ENCODE measurements at regions of chr17 and their contacts with region 1.

Region 1: DNA sequence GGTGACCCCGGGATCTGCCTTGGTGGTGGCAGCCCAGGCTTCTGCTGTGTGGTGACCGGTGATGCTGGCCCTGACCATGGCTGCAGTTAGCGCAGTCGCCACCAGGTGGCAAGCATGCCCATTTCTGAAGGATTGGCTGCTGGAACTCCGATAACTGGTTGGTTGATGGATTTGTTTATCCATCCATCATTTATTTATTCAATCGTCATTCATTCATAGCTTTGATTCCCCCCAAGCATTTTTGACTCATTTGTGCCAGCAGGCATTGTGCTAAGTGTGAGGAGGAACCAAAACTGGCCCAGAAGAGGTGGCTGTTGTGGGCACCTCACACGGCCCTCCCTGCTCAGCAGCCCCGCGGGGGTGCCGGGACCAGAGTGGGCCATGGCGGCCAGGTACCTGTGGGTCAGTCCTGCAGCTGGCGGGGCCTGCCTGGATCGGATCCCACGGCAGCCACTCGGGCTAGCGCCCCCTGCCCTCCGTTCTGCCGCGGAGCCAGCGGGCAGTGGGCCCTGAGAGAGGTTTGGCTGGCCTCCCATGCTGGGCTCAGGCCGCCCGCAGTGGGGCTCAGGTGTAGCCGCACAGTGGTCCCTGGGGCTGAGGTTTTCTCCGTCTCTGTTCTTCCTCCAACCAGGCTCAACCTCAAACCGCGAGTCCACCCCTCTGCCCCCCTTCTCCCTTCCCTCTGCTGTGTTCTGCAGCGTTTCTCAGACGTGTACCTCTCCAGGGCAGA is 28.8 kb upstream of the ITGA3 start:
- DNase-seq: peak; percentile 64 to 89
- ATAC-seq: peak; percentile 92

Region 2: GRCh38 chr17:49910094-49910857 is 116.8 kb before region 1 on chr17:
- intact Hi-C with region 1: no loop called
- DNase-seq: no peak
- ATAC-seq: no peak

Region 3: DNA sequence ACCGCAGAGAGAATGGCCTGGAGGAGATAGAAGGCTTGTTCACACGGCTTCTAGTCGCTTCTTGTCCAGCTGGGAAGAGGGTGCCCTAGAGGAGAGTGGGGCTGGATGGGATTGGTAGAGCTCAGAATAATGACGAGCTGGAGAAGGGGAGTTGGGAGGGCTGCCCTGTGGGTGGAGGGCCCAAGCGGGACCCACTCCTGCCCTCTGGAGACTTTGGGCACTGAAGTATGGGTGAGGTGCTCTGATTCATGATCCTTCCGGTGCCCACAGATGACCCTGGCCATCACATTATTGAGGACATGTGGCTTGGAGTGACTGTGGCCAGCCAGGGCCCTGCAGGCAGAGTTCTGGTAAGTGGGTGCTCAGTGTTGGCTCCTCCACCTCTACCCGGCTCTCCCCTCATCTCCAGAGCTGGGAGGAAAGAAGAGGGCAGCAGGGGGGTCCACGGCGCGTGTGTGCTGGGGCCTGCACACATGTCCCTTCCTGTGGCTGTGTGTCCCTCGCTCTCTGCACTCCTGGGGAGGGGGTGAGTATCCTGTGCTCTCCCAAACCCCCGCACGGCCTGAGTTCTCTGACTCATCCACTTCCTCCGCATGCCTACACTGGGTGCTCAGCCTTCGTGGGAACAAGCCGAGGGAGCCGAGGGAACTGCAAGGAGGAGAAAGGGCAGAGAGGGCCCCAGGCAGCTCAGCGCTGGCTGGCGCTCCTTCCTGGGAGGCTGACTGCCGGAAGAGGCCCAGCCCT is 37.4 kb after region 1 on chr17:
- intact Hi-C with region 1: loop called in 1 of 2 experiments (anchors 5 kb)
- DNase-seq: no peak
- ATAC-seq: no peak

Region 4: DNA sequence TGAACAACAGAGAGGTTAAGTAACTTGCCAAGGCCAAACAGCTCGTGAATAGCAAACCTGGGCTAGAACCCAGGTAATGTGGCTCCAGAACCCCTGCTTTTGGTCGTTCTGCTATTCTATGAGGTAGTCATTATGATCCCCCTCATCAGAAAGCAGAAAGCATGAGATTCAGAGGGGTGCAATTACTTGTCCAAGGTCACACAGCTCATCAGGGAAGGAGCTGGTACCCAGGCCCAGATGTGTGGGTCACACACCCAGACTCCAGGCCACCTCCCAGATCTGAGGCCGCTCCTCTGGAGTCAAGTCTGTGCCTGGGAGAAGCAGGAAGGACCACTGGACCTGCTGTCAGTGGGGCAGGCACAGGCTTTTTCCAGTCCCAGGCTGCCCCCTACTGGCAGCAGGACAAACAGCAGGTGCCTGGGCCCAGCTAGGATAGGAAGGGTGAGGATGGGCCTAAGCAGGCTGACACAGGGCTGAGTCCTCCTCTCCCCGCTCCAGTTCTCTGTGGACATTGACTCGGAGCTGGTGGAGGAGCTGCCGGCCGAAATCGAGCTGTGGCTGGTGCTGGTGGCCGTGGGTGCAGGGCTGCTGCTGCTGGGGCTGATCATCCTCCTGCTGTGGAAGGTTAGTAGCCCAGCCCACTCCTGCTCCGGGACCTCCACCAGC is 60.3 kb after region 1 on chr17:
- intact Hi-C with region 1: loop called in 1 of 2 experiments (anchors 2 kb)
- DNase-seq: peak; percentile 58 to 69
- ATAC-seq: peak; percentile 77

Region 5: DNA sequence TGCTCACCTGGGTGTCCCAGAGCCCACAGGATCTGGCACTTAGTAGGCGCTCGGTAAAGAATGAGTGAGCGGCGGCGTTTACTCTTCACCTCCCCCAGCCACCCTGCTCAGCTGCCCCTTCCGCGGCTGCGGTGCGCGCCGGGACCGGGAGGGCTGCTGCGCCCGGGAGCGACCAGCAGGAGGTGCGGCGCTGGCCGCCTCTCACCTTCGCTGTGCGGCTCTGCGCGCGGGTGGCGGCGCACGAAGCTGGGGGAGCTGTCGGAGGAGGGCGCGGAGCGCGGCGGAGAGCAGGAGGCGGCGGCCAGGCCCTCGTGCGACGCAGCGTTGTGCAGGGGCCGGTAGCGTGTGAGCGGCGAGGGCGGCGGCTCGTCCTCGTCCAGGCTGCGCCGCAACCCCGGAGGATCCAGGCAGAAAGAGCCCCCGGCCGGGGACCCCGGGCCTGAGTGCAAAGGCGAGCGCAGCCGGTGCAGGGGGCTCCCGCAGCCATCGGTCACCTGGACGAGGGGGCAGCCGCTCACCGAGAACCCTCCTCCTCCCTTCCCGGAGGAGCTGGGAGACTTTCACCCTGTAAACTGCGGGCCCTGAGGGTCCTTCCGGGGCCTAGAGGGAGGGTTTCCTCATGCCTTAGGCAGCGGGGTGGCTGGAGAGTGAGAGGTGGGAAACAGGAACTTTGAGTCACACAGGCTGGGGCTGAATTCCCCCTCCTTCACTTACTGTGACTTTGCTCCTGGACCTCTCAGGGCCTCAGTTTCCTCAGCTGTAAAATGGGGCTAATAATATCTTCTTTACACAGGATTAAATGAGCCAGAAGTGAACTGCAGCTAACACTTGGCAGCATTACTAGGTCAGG is 90.4 kb after region 1 on chr17:
- intact Hi-C with region 1: no loop called
- DNase-seq: peak in 1 of 2 donors; percentile 73
- ATAC-seq: peak; percentile 74

Region 6: GRCh38 chr17:50129728-50130558 is 102.9 kb after region 1 on chr17 and contains the start of gene SAMD14:
- intact Hi-C with region 1: no loop called
- DNase-seq: peak in 1 of 2 donors; percentile 42
- ATAC-seq: peak; percentile 39
- total RNA-seq, gene SAMD14: 0.70 to 0.92 TPM